Prostate gland (tissue), 2 donors: ENCODE measurements at regions of chr16 and their contacts with region 1.

Region 1: DNA sequence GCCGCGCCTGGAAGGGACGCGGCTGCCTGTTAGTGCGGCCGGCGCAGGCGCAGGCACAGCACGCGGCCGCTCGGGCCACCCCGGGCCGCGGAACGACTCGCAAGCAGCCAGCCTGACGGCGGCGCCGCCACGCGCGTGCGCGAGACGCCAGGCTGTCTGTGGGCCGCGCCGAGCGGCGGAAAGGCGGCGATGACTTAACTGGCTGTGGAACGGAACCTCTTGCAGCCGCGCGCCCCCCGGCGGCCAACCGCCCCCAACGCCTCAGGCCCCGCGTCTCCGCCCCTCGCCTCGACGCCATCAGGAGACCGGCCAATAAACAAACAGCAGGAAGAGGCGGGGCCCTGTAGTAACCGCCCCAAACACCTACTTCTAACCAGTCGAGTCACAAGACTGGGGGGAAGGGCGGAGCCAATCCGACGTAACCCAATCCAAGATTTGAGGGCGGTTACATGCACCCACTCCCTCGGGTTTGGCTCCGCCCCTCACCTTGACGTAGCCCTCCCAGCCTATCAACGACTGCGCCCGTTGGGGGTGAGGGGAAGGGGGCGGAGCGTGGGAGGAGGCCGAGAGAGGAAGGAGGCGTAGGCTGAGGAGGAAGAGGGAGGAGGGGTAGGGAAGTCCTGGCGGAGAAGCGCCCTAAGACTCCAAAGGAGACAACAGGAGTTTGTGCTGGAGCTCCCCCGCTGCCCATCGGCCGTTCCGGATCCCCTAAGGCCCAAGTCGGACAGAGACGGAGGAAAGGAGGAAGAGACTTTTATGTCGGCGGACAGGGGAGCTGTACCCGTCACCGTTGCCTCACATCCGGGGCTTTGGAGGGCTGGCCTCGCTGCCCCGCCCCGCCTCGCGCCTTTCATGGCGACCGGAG is at the start of gene FBRS:
- DNase-seq: peak; percentile 100
- H3K4me3 ChIP-seq: peak within 1 kb of the TSS; percentile 83 to 97
- H3K27ac ChIP-seq: peak within 1 kb of the TSS; percentile 98 to 99
- H3K4me1 ChIP-seq: peaks cover 18% of the 10 kb centered on the region
- H3K27me3 ChIP-seq: no peaks in the 10 kb centered on the region
- CTCF ChIP-seq: peak; percentile 77 to 97 (median 90)
- POLR2A ChIP-seq: peak; percentile 82
- total RNA-seq, gene FBRS: 49.0 to 106 TPM

Region 2: GRCh38 chr16:29805378-29806098 is 852.6 kb before region 1 on chr16:
- intact Hi-C with region 1: loop called (anchors 10 kb)
- DNase-seq: peak; percentile 97
- H3K4me3 ChIP-seq: peak overlapping the region; percentile 63 to 68
- H3K27ac ChIP-seq: peak overlapping the region; percentile 97 to 98
- H3K4me1 ChIP-seq: peaks cover 18% of the 10 kb centered on the region
- H3K27me3 ChIP-seq: no peaks in the 10 kb centered on the region
- CTCF ChIP-seq: peak in 2 of 4 experiments; percentile 24 to 44
- POLR2A ChIP-seq: peak; percentile 81

Region 3: GRCh38 chr16:30065143-30065850 is 592.8 kb before region 1 on chr16 and contains the start of gene ALDOA:
- intact Hi-C with region 1: loop called (anchors 10 kb)
- DNase-seq: peak; percentile 98
- H3K4me3 ChIP-seq: peak within 1 kb of the TSS; percentile 86 to 98
- H3K27ac ChIP-seq: peak within 1 kb of the TSS; percentile 91 to 97
- H3K4me1 ChIP-seq: peaks cover 44% of the 10 kb centered on the region
- H3K27me3 ChIP-seq: no peaks in the 10 kb centered on the region
- CTCF ChIP-seq: peak in 2 of 4 experiments; percentile 2 to 17
- POLR2A ChIP-seq: peak; percentile 99
- total RNA-seq, gene ALDOA: 884 to 943 TPM

Region 4: GRCh38 chr16:30526823-30527635 is 131.1 kb before region 1 on chr16:
- intact Hi-C with region 1: no loop called
- DNase-seq: peak; percentile 99
- H3K4me3 ChIP-seq: peak overlapping the region; percentile 77 to 94
- H3K27ac ChIP-seq: peak overlapping the region; percentile 96 to 99
- H3K4me1 ChIP-seq: no peaks in the 10 kb centered on the region
- H3K27me3 ChIP-seq: no peaks in the 10 kb centered on the region
- CTCF ChIP-seq: peak in 2 of 4 experiments; percentile 41 to 50
- POLR2A ChIP-seq: peak; percentile 42

Region 5: DNA sequence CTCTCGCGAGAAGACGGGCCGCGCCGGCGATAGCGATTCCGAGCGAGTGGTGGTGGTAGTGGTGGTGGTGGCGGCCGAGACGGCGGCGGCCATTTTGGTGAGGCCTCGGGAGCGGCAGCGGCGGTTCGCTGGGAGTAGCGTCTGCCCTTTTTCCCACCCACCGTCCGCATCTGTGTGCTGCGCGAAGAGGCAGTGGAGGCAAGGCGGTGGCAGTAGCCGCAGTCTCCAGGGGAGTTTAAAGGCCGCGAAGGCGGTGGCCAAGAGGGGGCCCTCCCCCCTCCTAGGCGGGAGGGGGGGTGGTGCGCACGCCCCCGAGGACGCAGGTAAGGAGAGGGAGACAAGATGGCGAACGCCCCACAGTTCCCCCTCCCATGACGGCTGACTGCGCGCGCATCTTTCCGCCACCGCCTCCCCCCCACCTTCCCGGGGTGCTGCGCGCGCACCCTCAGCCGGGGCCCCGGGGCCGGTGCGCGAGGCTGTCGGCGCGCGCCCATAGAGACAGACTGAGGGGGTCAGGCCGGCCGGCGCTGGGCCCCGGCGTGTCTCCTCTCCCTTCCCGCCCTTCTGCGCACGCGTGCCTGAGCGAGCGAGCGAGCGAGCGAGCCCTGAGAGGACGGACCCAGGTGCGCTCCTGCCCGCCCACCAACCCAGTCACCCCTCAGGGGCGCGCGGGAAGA is 40.2 kb after region 1 on chr16:
- intact Hi-C with region 1: loop called (anchors 5 kb)
- DNase-seq: peak; percentile 92
- H3K4me3 ChIP-seq: peak overlapping the region; percentile 97
- H3K27ac ChIP-seq: peak overlapping the region; percentile 99
- H3K4me1 ChIP-seq: peaks cover 10% of the 10 kb centered on the region
- H3K27me3 ChIP-seq: no peaks in the 10 kb centered on the region
- CTCF ChIP-seq: peak in 2 of 4 experiments; percentile 11 to 24
- POLR2A ChIP-seq: peak; percentile 68